Colonic mucosa (tissue), 4 donors: ENCODE measurements at regions of chr12 and their contacts with region 1.

Region 1: GRCh38 chr12:88993651-88994050 is 358.6 kb downstream of the DUSP6 start:
- DNase-seq: no peak
- H3K4me3 ChIP-seq: no peak overlapping the region
- H3K27ac ChIP-seq: no peak overlapping the region
- H3K4me1 ChIP-seq: no peaks in the 10 kb centered on the region
- H3K27me3 ChIP-seq: no peaks in the 10 kb centered on the region
- CTCF ChIP-seq: peak; percentile 54

Region 2: GRCh38 chr12:88153959-88154358 is 839.7 kb before region 1 on chr12:
- intact Hi-C with region 1: loop called (anchors 10 kb)
- DNase-seq: no peak
- H3K4me3 ChIP-seq: no peak overlapping the region
- H3K27ac ChIP-seq: no peak overlapping the region
- H3K4me1 ChIP-seq: no peaks in the 10 kb centered on the region
- H3K27me3 ChIP-seq: no peaks in the 10 kb centered on the region
- CTCF ChIP-seq: peak; percentile 20

Region 3: DNA sequence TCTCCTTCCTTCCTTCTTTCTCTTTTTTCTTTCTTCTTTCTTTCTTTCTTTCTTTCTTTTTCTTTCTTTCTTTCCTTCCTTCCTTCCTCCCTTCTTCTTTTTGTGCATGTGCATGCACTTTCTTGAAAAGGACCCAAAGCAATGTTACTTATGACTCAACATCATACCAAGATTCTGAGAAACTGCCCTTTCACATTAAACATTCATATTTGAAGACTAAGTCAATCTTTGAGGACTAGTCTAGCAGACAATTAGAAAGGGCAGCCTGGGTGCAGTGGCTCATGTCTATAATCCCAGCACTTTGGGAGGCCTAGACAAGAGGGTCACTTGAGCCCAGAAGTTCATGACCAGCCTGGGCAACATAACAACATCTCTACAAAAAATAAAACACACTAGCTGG is 200.6 kb before region 1 on chr12:
- intact Hi-C with region 1: no loop called
- DNase-seq: no peak
- H3K4me3 ChIP-seq: no peak overlapping the region
- H3K27ac ChIP-seq: no peak overlapping the region
- H3K4me1 ChIP-seq: no peaks in the 10 kb centered on the region
- H3K27me3 ChIP-seq: no peaks in the 10 kb centered on the region
- CTCF ChIP-seq: no peak

Region 4: DNA sequence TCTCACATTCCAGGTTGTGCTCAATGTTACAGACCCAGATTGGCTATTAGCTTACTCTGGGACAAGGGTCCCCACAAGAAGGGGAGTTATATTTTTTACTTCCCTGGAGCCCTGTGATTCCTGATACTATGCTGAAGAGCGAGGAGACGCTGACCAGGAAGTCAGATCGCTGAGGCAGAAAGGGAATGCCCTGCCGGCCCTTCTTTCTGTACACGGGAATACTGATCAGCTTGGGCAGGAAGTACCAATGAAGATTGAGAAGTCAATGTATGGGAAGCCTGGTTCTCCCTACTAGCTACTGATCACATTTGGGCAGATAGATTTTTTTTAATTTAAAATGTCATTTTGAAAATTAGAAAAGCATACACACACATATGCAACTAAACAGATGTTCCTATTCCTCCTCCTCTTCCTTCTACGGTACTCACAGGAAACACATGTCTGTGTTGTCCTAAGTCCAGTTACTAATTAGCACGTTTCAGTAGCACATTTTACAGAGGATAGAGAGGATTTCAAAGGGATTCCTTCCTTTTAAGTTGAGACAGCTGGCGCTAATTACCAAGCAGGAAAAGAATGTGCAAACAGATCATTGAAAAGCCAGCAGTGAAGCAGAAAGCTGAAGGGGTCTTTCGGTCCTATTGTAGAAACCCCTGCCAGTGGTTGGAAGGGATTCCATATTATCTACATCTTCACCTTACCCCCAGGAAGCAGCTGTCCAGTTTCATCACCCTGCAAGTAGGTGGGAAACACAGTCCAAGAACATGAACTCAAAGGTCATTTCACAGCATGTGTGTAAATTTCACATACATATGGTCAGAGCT is 66.3 kb after region 1 on chr12:
- intact Hi-C with region 1: no loop called
- DNase-seq: peak; percentile 28
- H3K4me3 ChIP-seq: no peak overlapping the region
- H3K27ac ChIP-seq: no peak overlapping the region
- H3K4me1 ChIP-seq: no peaks in the 10 kb centered on the region
- H3K27me3 ChIP-seq: no peaks in the 10 kb centered on the region
- CTCF ChIP-seq: no peak

Region 5: GRCh38 chr12:89783357-89784060 is 789.9 kb after region 1 on chr12:
- intact Hi-C with region 1: no loop called
- DNase-seq: peak; percentile 21
- H3K4me3 ChIP-seq: no peak overlapping the region
- H3K27ac ChIP-seq: peak overlapping the region; percentile 24
- H3K4me1 ChIP-seq: no peaks in the 10 kb centered on the region
- H3K27me3 ChIP-seq: no peaks in the 10 kb centered on the region
- CTCF ChIP-seq: no peak